ENCODE measurements at regions of chr17 and their contacts with region 1.

Region 1: GRCh38 chr17:63911657-63912426 is 784 bp upstream of the CSHL1 start:
- DNase-seq: peak; percentile 62
- H3K4me3 ChIP-seq: no peak overlapping the region
- H3K27ac ChIP-seq: no peak overlapping the region
- H3K4me1 ChIP-seq: peaks cover 15% of the 10 kb centered on the region
- CTCF ChIP-seq: peak; percentile 67

Region 2: DNA sequence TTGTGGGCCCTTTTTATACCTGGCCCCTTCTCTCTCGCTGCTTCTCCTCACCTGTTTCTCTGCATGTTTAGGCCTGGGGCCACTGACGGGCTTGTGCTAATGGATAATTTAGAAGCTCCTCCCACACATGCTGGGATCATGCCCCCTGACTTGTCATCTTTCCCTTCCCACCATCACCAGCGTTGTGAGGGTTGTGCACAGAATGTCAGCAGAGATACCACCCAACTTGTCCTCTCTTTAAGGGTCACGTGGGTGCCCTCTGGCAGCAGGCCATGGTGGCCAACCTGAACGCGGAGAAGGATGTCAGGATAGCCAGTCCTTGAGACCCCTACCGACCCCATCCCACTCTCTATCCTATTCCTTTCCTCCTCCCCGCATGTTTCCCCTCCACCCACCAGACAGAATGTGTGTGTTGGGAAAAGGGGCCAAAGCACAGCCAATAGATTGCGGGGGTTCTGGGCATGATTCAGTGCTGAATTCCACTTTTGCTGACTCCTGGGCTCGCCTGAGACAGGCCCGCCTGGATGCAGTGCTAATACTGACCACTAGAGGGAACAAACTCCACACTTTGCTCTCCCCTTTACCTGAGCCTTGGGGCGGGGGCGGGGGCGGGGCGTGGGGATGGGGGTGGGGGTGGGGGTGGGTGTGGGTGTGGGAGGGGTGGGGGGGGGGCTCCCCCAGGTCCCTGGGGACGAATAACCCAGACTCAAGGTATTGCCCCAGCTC is 29.8 kb before region 1 on chr17 and contains the start of gene GH2:
- CTCF ChIA-PET with region 1: no interaction called
- POLR2A ChIA-PET with region 1: no interaction called
- intact Hi-C with region 1: no loop called
- DNase-seq: peak; percentile 61
- H3K4me3 ChIP-seq: no peak within 1 kb of the TSS
- H3K27ac ChIP-seq: no peak within 1 kb of the TSS
- H3K4me1 ChIP-seq: no peaks in the 10 kb centered on the region
- CTCF ChIP-seq: peak; percentile 69
- total RNA-seq, gene GH2: not detected in 2 replicates

Region 3: GRCh38 chr17:63993368-63993985 is 81.6 kb after region 1 on chr17:
- CTCF ChIA-PET with region 1: interaction called, 4 read pairs
- POLR2A ChIA-PET with region 1: no interaction called
- intact Hi-C with region 1: loop called (anchors 1 kb)
- DNase-seq: no peak
- H3K4me3 ChIP-seq: no peak overlapping the region
- H3K27ac ChIP-seq: no peak overlapping the region
- H3K4me1 ChIP-seq: peaks cover 19% of the 10 kb centered on the region
- CTCF ChIP-seq: no peak

Region 4: GRCh38 chr17:64025732-64026294 is 114.0 kb after region 1 on chr17:
- CTCF ChIA-PET with region 1: interaction called, 3 read pairs
- POLR2A ChIA-PET with region 1: interaction called, 3 read pairs
- intact Hi-C with region 1: loop called (anchors 1 kb)
- DNase-seq: peak; percentile 91
- H3K4me3 ChIP-seq: peak overlapping the region; percentile 20
- H3K27ac ChIP-seq: peak overlapping the region; percentile 20
- H3K4me1 ChIP-seq: peaks cover 73% of the 10 kb centered on the region
- CTCF ChIP-seq: peak; percentile 98

Measured in OCI-LY7 (cell line).